ENCODE measurements at regions of chr17 and their contacts with region 1.

Region 1: DNA sequence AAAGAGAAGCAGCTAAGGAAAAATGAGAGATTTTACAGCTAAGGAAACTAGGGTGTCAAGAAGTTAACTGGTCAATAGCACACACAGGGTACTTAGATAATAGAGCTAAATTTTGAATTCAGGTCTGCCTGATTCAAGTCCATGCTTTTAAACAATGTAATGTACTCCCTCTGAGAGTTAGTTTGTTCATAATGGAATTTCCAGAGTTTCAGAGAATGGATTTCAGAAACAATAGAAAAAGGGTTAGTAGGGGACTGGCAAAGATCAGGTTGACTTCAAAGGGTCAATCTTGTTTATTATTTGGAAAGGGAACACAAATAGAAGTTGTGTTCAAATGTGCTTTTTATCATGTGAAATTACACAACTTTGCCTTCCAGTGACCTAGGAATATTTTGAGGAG is 17.9 kb downstream of the NSRP1 start:
- DNase-seq: no peak
- ATAC-seq: no peak
- H3K4me3 ChIP-seq: no peak overlapping the region
- H3K27ac ChIP-seq: no peak overlapping the region
- H3K4me1 ChIP-seq: no peaks in the 10 kb centered on the region
- H3K27me3 ChIP-seq: no peaks in the 10 kb centered on the region
- CTCF ChIP-seq: no peak
- EP300 ChIP-seq: no peak
- POLR2A ChIP-seq: no peak
- RAD21 ChIP-seq: no peak

Region 2: DNA sequence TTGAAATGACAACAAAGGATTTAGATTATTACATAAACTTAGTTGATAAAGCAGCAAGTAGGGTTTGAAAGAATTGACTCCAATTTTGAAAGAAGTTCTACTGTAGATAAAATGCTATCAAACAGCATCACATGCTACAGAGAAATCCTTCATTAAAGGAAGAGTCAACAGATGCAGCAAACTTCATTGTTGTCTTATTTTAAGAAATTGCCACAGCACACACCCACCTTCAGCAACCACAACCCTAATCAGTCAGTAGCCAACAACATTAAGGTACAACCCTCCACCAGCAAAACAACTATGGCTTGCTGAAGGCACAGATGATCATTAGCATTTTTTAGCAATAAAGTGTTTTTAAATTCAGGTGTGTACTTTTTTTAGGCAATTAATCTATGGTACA is 93.0 kb before region 1 on chr17:
- CTCF ChIA-PET with region 1: no interaction called
- POLR2A ChIA-PET with region 1: no interaction called
- RAD21 ChIA-PET with region 1: no interaction called
- SMC1A ChIA-PET with region 1: no interaction called
- in situ Hi-C with region 1: no loop called
- intact Hi-C with region 1: no loop called
- DNase-seq: no peak
- ATAC-seq: no peak
- H3K4me3 ChIP-seq: no peak overlapping the region
- H3K27ac ChIP-seq: no peak overlapping the region
- H3K4me1 ChIP-seq: no peaks in the 10 kb centered on the region
- H3K27me3 ChIP-seq: no peaks in the 10 kb centered on the region
- CTCF ChIP-seq: no peak
- EP300 ChIP-seq: no peak
- POLR2A ChIP-seq: no peak
- RAD21 ChIP-seq: no peak

Region 3: GRCh38 chr17:30278032-30278431 is 143.5 kb after region 1 on chr17:
- CTCF ChIA-PET with region 1: no interaction called
- POLR2A ChIA-PET with region 1: no interaction called
- RAD21 ChIA-PET with region 1: no interaction called
- SMC1A ChIA-PET with region 1: no interaction called
- in situ Hi-C with region 1: no loop called
- intact Hi-C with region 1: loop called (anchors 5 kb)
- DNase-seq: no peak
- ATAC-seq: peak; percentile 52; the same call in 2 of the 3 replicates
- H3K4me3 ChIP-seq: no peak overlapping the region
- H3K27ac ChIP-seq: no peak overlapping the region
- H3K4me1 ChIP-seq: no peaks in the 10 kb centered on the region; the same call in 1 of the 2 replicates
- H3K27me3 ChIP-seq: no peaks in the 10 kb centered on the region
- CTCF ChIP-seq: peak; percentile 36 to 53 (median 38); a peak in 5 of 6 replicates
- EP300 ChIP-seq: no peak
- POLR2A ChIP-seq: no peak
- RAD21 ChIP-seq: peak; percentile 69